Heart right ventricle (tissue), 16 donors: ENCODE measurements at regions of chr3 and their contacts with region 1.

Region 1: DNA sequence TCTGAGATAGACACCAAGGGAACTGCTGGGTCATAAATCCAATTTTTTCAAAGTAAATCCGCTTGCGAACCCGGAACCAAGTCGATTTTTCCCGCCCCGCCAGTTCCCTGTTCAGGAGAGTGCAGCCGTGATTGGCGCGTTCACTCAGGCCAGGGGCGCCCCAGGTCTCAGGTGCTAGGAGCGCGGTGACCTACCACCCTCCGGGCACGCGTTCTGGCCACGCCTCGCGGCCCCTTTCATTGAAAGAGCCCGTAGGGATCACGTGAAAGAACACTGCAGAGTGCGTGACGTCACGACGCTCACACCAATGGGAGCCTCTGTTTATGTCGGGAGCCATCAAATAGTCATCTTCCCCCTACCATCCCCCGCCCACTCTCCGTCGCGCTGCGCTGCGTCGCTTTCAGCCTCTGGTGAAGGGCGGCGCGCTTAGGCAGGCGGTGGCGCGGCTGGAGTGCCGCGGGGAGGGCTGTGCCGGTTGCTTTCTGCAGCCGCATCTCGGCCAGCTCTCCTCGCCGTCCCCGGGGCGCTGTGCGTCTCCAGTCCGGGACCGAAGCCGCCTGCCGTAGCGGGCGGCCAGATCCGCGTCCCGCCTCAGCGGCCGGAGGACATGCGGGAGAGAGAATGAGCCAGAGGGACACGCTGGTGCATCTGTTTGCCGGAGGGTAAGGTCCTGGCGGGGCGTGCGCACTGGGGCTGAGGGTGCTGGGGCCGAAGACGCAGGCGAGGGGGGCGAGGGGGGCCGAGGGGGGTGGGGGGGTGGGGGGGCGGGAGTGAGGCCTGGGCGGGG is at the start of gene SLC25A36:
- DNase-seq: peak; percentile 96 to 98
- ATAC-seq: peak; percentile 99
- H3K4me3 ChIP-seq: peak within 1 kb of the TSS; percentile 73 to 96 (median 88)
- H3K27ac ChIP-seq: peak within 1 kb of the TSS; percentile 92 to 99 (median 97)
- H3K4me1 ChIP-seq: peaks cover 5 to 44% (median 32%) of the 10 kb centered on the region in 9 donors
- H3K27me3 ChIP-seq: no peaks in the 10 kb centered on the region
- CTCF ChIP-seq: peak in 2 of 9 donors; percentile 17 to 37
- total RNA-seq, gene SLC25A36: 42.0 to 94.2 (median 59.2) TPM

Region 2: DNA sequence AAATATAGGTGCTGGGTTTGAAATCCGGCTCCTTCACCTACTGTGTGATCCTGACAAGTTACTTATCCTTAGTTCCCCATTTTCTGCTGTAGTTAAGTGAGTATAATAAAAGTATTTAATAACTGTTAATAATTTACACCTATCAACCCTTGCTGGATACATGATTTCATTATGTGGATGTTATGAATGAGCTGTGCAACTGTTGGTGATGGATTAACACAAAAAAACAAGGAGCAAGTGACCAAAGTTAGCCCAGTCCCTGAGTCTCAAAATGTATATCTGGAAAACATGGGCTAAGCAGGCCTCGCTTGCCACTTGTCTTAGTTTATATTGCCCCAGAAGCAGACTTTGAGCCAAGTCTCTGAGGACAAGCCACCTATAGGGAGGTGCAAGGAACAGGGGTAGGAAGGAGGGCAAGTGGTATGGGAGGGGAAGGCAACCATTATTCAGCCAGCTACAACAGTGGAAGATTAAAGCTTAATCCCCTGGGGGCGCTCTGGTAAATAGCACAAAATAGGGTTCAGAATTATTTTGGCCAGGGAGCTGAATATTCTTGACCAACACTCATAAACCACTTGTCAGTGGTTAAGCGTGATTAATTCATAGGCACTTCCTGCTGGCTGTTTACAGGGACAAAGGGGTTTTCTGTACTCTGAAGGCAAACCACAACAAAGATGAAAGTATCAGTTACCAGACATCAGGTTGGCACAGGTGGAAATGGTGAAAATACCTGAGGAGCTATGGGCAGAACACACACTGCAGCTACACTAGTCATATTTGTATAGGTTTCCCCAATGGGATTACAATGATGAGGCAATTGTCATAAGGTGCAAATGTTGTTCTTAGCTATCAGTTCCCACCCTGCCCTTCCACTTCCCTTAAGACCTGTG is 187.5 kb before region 1 on chr3:
- intact Hi-C with region 1: no loop called
- DNase-seq: no peak
- ATAC-seq: no peak
- H3K4me3 ChIP-seq: no peak overlapping the region
- H3K27ac ChIP-seq: no peak overlapping the region
- H3K4me1 ChIP-seq: no peaks in the 10 kb centered on the region
- H3K27me3 ChIP-seq: peaks cover 0 to 22% (median 0%) of the 10 kb centered on the region in 7 donors
- CTCF ChIP-seq: no peak

Region 3: GRCh38 chr3:140922634-140923033 is 19.0 kb before region 1 on chr3:
- intact Hi-C with region 1: loop called in 1 of 10 experiments (anchors 2 kb)
- DNase-seq: no peak
- ATAC-seq: no peak
- H3K4me3 ChIP-seq: no peak overlapping the region
- H3K27ac ChIP-seq: no peak overlapping the region
- H3K4me1 ChIP-seq: peaks cover 0 to 22% (median under 1%) of the 10 kb centered on the region in 9 donors
- H3K27me3 ChIP-seq: no peaks in the 10 kb centered on the region
- CTCF ChIP-seq: peak in 8 of 9 donors; percentile 6 to 46 (median 35)

Region 4: GRCh38 chr3:141000027-141000663 is 58.5 kb after region 1 on chr3:
- intact Hi-C with region 1: no loop called
- DNase-seq: peak; percentile 62 to 63
- ATAC-seq: peak; percentile 91 to 97 (median 94)
- H3K4me3 ChIP-seq: no peak overlapping the region
- H3K27ac ChIP-seq: no peak overlapping the region
- H3K4me1 ChIP-seq: no peaks in the 10 kb centered on the region
- H3K27me3 ChIP-seq: no peaks in the 10 kb centered on the region
- CTCF ChIP-seq: peak; percentile 47 to 85 (median 77)